ENCODE measurements at regions of chr16 and their contacts with region 1.

Region 1: DNA sequence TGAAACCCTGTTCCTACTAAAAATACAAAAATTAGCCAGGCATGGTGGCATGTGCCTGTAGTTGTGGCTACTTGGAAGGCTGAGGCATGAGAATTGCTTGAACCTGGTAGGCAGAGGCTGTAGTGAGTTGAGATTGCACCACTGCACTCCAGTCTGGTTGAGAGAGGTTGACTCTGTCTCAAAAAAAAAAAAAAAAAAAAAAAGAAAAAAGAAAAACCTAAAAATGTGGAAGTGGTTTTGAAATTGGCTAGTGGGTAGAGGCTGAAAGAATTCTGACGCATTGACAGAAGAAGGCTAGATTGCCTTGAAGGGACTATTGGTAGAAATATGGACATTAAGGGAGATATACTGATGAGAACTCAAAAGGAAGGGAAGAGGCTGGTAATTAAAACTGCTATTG is 33.6 kb upstream of the CPPED1 start:
- DNase-seq: no peak
- H3K4me3 ChIP-seq: no peak overlapping the region
- H3K27ac ChIP-seq: no peak overlapping the region
- H3K4me1 ChIP-seq: no peaks in the 10 kb centered on the region
- H3K27me3 ChIP-seq: no peaks in the 10 kb centered on the region
- CTCF ChIP-seq: no peak
- POLR2A ChIP-seq: no peak

Region 2: GRCh38 chr16:13848795-13849194 is 1011.5 kb after region 1 on chr16:
- intact Hi-C with region 1: loop called (anchors 5 kb)
- DNase-seq: no peak
- H3K4me3 ChIP-seq: no peak overlapping the region
- H3K27ac ChIP-seq: no peak overlapping the region
- H3K4me1 ChIP-seq: no peaks in the 10 kb centered on the region
- H3K27me3 ChIP-seq: no peaks in the 10 kb centered on the region
- CTCF ChIP-seq: no peak
- POLR2A ChIP-seq: no peak

Measured in breast epithelium (tissue), 4 donors.